ENCODE measurements at regions of chr1 and their contacts with region 1.

Region 1: GRCh38 chr1:16217061-16217785 is 4.8 kb upstream of the ARHGEF19 start:
- DNase-seq: peak; percentile 96
- ATAC-seq: peak; percentile 99
- H3K4me3 Mint-ChIP-seq: peak overlapping the region; percentile 74
- H3K27ac Mint-ChIP-seq: peak overlapping the region; percentile 31
- H3K4me1 Mint-ChIP-seq: peaks cover 17% of the 10 kb centered on the region
- H3K27me3 Mint-ChIP-seq: no peaks in the 10 kb centered on the region
- CTCF ChIP-seq: no peak

Region 2: DNA sequence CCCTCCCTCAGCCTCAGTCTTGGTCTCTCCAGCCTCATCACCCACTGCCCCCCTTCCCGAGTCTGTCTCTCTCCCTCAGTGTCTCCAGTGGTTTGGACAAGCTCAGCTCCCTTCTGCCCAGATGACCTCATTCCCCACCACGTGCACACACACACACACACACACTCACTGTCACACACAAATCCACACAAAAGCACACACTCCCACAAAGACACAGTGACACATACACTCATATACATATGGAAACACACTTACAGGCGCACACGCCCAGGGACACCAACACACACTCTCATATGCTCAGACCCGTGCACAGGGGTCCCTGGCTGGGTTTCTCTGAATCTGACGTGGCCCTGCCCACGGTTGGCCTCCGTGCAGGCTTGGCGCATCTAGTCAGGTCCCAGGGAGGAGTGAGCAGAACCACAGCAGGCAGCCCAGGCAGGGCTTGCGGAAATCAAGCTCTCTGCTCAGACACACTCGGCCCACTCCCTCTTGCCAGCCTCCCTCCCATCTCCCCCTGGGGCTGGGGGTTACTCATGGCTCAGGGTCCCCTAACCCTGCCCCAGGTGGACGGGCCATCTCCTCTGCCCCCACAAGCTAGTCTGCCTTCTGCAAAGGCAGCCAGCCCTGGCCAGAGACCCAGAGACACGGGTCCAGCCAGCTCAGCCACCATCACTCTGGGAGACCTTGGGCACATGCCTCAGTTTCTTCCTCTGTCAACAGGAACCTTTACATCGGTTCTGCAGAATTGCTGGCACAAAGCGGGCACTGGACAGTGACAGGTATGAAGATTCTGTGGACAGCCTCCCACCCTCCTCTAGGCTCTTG is 105.2 kb before region 1 on chr1:
- CTCF ChIA-PET with region 1: no interaction called
- POLR2A ChIA-PET with region 1: no interaction called
- intact Hi-C with region 1: no loop called
- DNase-seq: no peak
- ATAC-seq: no peak
- H3K4me3 Mint-ChIP-seq: no peak overlapping the region
- H3K27ac Mint-ChIP-seq: no peak overlapping the region
- H3K4me1 Mint-ChIP-seq: no peaks in the 10 kb centered on the region
- H3K27me3 Mint-ChIP-seq: peaks cover 11% of the 10 kb centered on the region
- CTCF ChIP-seq: no peak

Region 3: DNA sequence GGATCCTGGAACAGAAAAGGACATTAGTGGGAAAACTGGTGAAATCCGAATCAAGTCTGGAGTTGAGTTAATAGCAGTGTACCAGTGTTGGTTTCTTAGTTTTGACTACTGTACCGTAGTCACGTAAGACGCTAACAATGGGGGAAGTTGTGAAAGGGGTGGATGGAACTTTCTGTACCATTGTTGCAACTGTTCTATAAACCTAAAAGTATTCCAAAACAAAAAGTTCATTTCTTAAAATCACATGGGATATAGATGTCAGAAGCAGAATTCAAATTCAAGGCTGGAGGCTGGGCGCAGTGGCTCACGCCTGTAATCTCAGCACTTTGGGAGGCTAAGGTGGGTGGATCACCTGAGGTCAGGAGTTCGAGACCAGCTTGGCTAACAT is 21.7 kb before region 1 on chr1:
- CTCF ChIA-PET with region 1: no interaction called
- POLR2A ChIA-PET with region 1: no interaction called
- intact Hi-C with region 1: no loop called
- DNase-seq: no peak
- ATAC-seq: no peak
- H3K4me3 Mint-ChIP-seq: no peak overlapping the region
- H3K27ac Mint-ChIP-seq: no peak overlapping the region
- H3K4me1 Mint-ChIP-seq: peaks cover 6% of the 10 kb centered on the region
- H3K27me3 Mint-ChIP-seq: no peaks in the 10 kb centered on the region
- CTCF ChIP-seq: no peak

Region 4: DNA sequence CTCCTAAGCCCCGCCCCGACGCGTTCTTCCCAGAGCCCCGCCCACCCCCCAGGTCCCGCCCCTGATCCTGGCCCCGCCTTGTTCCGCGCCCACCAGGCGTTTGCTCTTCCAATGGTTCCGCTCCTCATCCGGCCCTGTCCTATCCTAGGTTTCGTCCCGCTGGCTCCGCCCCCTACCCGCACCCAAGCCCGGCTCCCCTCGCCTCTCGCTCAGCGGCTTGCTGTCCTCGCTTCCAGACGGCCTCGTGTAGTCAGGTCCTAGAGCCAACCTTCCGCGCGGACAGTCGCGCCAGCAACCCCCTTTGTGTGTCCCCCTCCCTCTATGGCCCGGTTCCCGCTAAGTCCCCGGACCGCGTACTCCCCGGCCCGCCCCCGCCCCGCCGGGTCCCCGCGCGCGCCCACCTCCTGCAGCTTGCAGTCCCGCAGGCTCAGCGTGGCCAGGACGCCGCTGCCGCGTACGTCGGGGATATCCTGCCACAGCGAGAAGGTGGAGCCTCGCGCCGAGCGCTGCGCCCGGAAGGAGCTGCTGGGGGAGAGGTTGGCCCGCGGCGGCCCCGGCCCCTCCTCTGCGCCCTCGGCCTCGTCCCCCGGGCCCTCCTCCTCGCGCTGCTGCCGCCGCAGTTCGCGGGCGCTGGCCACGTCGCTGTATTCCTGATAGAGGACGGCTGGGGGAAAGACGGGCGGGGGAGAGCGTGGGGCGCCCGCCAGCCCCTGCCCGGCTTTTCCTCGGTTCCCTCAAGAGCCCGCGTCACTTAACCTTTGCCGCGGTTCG is 10.5 kb before region 1 on chr1:
- CTCF ChIA-PET with region 1: interaction called, 4 read pairs
- POLR2A ChIA-PET with region 1: interaction called, 27 read pairs
- intact Hi-C with region 1: no loop called
- DNase-seq: peak; percentile 96
- ATAC-seq: peak; percentile 93
- H3K4me3 Mint-ChIP-seq: peak overlapping the region; percentile 80
- H3K27ac Mint-ChIP-seq: peak overlapping the region; percentile 90
- H3K4me1 Mint-ChIP-seq: peaks cover 4% of the 10 kb centered on the region
- H3K27me3 Mint-ChIP-seq: no peaks in the 10 kb centered on the region
- CTCF ChIP-seq: no peak

Measured in activated CD8-positive, alpha-beta T cell treated with anti-CD3 and anti-CD28 coated beads for 36 hours (primary cell).